ENCODE measurements at regions of chr17 and their contacts with region 1.

Region 1: DNA sequence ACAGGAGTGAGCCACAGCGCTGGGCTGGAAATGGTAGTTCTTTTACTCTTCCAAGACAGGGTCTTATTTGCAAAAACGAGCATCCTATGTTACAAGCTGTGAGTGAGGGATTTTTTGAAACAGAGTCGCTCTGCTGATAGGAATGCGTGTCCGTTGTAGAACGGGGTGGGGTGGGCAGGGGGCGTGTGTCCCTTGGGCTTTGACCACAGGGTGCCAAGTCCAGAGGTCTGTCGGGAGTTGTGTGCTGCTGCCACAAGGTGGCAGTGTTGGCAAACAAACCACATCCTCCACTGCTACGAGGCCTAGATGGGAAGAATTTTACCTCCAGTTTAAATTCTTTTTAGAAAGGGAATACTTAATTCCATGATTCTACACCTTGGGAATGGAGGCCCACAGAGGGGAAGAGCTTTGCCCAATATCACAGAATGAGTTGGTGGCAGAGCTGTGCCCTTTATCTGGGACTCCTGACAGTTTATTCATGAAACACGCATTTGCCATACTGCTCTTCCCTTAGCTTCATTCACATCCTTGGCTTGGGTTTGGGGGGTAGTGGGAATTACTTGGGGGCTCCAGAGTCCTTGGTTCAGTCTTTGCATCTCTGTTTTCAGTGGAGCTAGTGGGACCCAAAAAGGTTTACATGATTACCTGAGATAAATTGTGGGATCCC is 30.6 kb upstream of the ETV4 start:
- DNase-seq: peak; percentile 80 to 93 (median 89)
- ATAC-seq: peak; percentile 99
- H3K4me3 ChIP-seq: no peak overlapping the region
- H3K27ac ChIP-seq: no peak overlapping the region
- H3K4me1 ChIP-seq: no peaks in the 10 kb centered on the region
- H3K27me3 ChIP-seq: peaks cover 22 to 33% of the 10 kb centered on the region in 2 experiments; a peak in 4 of 5 replicates
- CTCF ChIP-seq: peak; percentile 92 to 95 (median 93)
- EP300 ChIP-seq: no peak
- POLR2A ChIP-seq: no peak
- RAD21 ChIP-seq: peak; percentile 83 to 96

Region 2: DNA sequence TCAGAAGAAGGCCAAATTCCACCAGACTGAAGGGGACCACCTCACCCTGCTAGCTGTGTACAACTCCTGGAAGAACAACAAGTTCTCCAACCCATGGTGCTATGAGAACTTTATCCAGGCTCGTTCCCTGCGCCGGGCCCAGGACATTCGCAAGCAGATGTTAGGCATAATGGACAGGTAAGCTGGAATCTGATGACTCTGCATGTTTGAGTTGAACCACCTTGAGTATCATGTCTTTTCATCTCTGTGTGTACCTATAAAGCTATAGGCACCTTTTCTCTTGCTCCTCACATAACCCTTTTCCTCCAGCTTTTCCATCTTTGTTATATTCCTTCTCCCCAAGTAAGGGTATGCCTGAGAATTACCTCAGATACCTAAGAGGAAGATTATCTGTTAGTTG is 55.3 kb before region 1 on chr17:
- CTCF ChIA-PET with region 1: interaction called, 3 read pairs
- POLR2A ChIA-PET with region 1: no interaction called
- in situ Hi-C with region 1: no loop called
- intact Hi-C with region 1: loop called (anchors 2 kb)
- DNase-seq: no peak
- ATAC-seq: no peak
- H3K4me3 ChIP-seq: no peak overlapping the region
- H3K27ac ChIP-seq: no peak overlapping the region
- H3K4me1 ChIP-seq: no peaks in the 10 kb centered on the region; a peak in 2 of 5 replicates
- H3K27me3 ChIP-seq: no peaks in the 10 kb centered on the region
- CTCF ChIP-seq: no peak
- EP300 ChIP-seq: no peak
- POLR2A ChIP-seq: no peak
- RAD21 ChIP-seq: no peak

Region 3: GRCh38 chr17:43560461-43561427 is 16.0 kb before region 1 on chr17:
- CTCF ChIA-PET with region 1: interaction called, 3 read pairs
- POLR2A ChIA-PET with region 1: interaction called, 10 read pairs
- in situ Hi-C with region 1: no loop called
- intact Hi-C with region 1: no loop called
- DNase-seq: no peak
- ATAC-seq: no peak
- H3K4me3 ChIP-seq: no peak overlapping the region
- H3K27ac ChIP-seq: no peak overlapping the region
- H3K4me1 ChIP-seq: peaks cover 13 to 14% of the 10 kb centered on the region in 2 experiments; a peak in 4 of 5 replicates
- H3K27me3 ChIP-seq: no peaks in the 10 kb centered on the region; a peak in 1 of 5 replicates
- CTCF ChIP-seq: no peak
- EP300 ChIP-seq: no peak
- POLR2A ChIP-seq: no peak
- RAD21 ChIP-seq: no peak

Region 4: DNA sequence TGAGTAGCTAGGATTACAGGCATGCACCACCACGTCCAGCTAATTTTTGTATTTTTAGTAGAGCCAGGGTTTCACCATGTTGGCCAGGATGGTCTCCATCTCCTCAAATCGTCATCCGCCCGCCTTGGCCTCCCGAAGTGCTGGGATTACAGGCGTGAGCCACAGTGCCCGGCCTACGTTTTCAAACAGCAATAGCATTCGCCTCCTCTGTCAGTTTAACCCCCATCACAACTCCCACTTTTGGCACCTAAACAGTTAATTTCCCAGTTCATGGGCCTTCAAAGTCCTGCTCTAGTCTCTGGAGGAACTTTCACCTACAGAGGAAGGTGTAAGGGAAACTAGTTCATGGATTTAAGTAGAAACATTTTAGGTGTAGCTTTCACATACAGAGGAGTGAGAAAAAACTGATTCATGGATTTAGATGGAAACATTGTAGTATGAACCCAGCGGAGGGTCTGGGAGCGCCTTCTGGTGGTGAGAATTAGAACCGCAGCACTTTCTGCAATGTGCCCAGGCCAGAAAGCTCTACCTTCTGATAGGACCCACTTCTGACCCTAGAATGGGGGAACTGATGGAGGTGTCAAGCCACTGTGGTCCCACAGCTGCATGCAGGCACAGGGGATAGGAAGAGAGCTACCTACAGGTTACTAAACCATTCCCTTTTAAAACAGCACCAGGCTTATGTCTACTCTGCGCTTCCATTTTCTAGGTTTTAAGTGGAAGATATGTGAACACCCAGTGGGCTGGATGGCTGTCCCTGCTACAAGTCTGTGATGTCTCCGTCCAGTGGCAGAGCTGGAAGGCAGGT is 97.0 kb after region 1 on chr17:
- CTCF ChIA-PET with region 1: interaction called, 25 read pairs
- POLR2A ChIA-PET with region 1: interaction called, 5 read pairs
- in situ Hi-C with region 1: loop called (anchors 5 kb)
- intact Hi-C with region 1: loop called (anchors 1 kb)
- DNase-seq: peak; percentile 62 to 72 (median 66)
- ATAC-seq: peak; percentile 78
- H3K4me3 ChIP-seq: no peak overlapping the region
- H3K27ac ChIP-seq: no peak overlapping the region
- H3K4me1 ChIP-seq: peaks cover 0 to 6% of the 10 kb centered on the region in 2 experiments; a peak in 2 of 5 replicates
- H3K27me3 ChIP-seq: peaks cover 7 to 37% of the 10 kb centered on the region in 2 experiments; a peak in 3 of 5 replicates
- CTCF ChIP-seq: peak; percentile 82 to 94 (median 94)
- EP300 ChIP-seq: no peak
- POLR2A ChIP-seq: no peak
- RAD21 ChIP-seq: peak; percentile 76 to 91

Region 5: GRCh38 chr17:43694077-43694870 is 117.6 kb after region 1 on chr17:
- CTCF ChIA-PET with region 1: interaction called, 9 read pairs
- POLR2A ChIA-PET with region 1: interaction called, 3 read pairs
- in situ Hi-C with region 1: no loop called
- intact Hi-C with region 1: loop called (anchors 1 kb)
- DNase-seq: peak; percentile 69 to 81 (median 77)
- ATAC-seq: peak; percentile 99
- H3K4me3 ChIP-seq: no peak overlapping the region
- H3K27ac ChIP-seq: no peak overlapping the region
- H3K4me1 ChIP-seq: no peaks in the 10 kb centered on the region
- H3K27me3 ChIP-seq: peaks cover 0 to 42% of the 10 kb centered on the region in 2 experiments; a peak in 2 of 5 replicates
- CTCF ChIP-seq: peak; percentile 90 to 97 (median 97)
- EP300 ChIP-seq: no peak
- POLR2A ChIP-seq: no peak
- RAD21 ChIP-seq: peak; percentile 93 to 97

Region 6: GRCh38 chr17:43760254-43760852 is 183.7 kb after region 1 on chr17:
- CTCF ChIA-PET with region 1: interaction called, 37 read pairs
- POLR2A ChIA-PET with region 1: no interaction called
- in situ Hi-C with region 1: loop called (anchors 5 kb)
- intact Hi-C with region 1: loop called (anchors 1 kb)
- DNase-seq: peak; percentile 91 to 92 (median 92)
- ATAC-seq: peak; percentile 98
- H3K4me3 ChIP-seq: no peak overlapping the region
- H3K27ac ChIP-seq: no peak overlapping the region
- H3K4me1 ChIP-seq: peaks cover 0 to 8% of the 10 kb centered on the region in 2 experiments; a peak in 2 of 5 replicates
- H3K27me3 ChIP-seq: peaks cover 19 to 59% of the 10 kb centered on the region in 2 experiments
- CTCF ChIP-seq: peak; percentile 99 to 100 (median 100)
- EP300 ChIP-seq: no peak
- POLR2A ChIP-seq: no peak
- RAD21 ChIP-seq: peak; percentile 99 to 100